HepG2 (cell line): ENCODE measurements at regions of chr17 and their contacts with region 1.

Region 1: DNA sequence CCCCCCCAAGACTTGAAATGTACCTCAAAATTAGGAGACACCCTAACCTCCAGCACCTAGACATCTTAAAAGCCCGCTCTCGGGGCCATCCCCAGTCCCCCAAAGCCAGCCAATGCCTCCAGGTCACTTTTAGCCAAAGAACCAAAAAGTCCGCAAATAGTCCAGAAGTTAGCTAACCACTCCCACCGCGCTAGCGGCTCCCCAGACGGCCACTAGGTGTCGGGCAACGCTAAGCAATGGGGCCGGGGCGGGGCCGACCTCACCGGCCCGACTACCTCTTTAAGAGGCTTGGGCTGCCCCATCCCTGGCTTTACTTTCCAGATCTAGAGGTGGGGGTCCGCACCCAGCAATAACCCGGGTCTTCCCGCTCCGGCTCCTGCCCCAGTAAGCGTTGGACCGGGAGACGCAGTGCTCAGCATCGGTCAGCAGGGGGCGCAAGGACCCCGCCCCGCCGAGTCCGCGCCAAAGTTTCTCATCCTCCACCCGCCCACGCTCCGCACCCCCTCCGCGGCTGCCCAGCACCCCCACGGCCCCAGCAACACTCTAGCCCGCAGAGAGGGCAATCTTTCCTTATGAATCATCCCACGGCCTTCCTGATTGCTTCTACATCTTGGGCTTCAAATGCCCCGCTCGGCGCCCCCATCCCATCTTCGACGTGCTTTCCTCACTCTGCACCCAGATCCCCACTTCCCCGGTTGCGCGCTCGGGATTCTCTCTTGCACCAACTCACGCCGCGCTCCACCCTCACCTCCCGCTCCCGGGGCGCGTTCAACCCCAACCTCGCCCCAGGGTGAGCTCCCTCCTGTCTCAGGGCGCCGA is 765 bp downstream of the COL1A1 start:
- DNase-seq: peak; percentile 71
- ATAC-seq: peak; percentile 84
- H3K4me3 ChIP-seq: peak overlapping the region; percentile 26 to 73 (median 36); a peak in 5 of 6 replicates
- H3K27ac ChIP-seq: no peak overlapping the region
- H3K4me1 ChIP-seq: 0 out of 2 replicates have a peak, but pooled peaks cover 9% of the 10 kb centered on the region
- H3K27me3 ChIP-seq: peaks cover 10 to 72% of the 10 kb centered on the region in 2 experiments
- CTCF ChIP-seq: peak; percentile 95
- EP300 ChIP-seq: no peak
- POLR2A ChIP-seq: no peak
- RAD21 ChIP-seq: peak; percentile 100

Region 2: DNA sequence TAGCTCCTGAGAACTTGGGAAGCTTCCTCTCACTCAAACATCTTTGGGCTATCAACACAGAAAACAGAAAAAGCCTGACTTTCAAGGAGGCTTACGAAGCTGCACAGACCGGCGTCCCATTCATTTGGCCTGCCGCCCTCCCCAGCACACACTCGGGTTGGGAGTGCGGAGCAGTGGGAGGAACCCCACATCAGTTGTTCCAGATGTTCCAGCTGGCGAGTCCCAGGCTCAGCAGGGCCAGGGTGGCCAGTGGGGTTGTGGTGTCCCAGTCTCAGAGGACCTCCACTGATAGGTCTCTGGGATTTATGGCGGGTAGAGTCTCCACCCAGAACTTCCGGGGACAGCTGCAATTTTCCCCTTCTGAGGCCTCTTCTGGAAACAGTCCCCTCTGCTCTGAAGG is 274.7 kb before region 1 on chr17:
- CTCF ChIA-PET with region 1: no interaction called
- POLR2A ChIA-PET with region 1: no interaction called
- in situ Hi-C with region 1: no loop called
- intact Hi-C with region 1: no loop called
- DNase-seq: no peak
- ATAC-seq: no peak
- H3K4me3 ChIP-seq: no peak overlapping the region
- H3K27ac ChIP-seq: no peak overlapping the region
- H3K4me1 ChIP-seq: peaks cover 24% of the 10 kb centered on the region
- H3K27me3 ChIP-seq: peaks cover 6 to 55% of the 10 kb centered on the region in 2 experiments; a peak in 3 of 5 replicates
- CTCF ChIP-seq: no peak
- EP300 ChIP-seq: no peak
- POLR2A ChIP-seq: no peak
- RAD21 ChIP-seq: no peak

Region 3: GRCh38 chr17:50169121-50169764 is 31.4 kb before region 1 on chr17:
- CTCF ChIA-PET with region 1: interaction called, 36 read pairs
- POLR2A ChIA-PET with region 1: no interaction called
- in situ Hi-C with region 1: no loop called
- intact Hi-C with region 1: loop called (anchors 1 kb)
- DNase-seq: peak; percentile 69
- ATAC-seq: peak; percentile 58
- H3K4me3 ChIP-seq: no peak overlapping the region
- H3K27ac ChIP-seq: no peak overlapping the region
- H3K4me1 ChIP-seq: peaks cover 33% of the 10 kb centered on the region
- H3K27me3 ChIP-seq: peaks cover 10 to 46% of the 10 kb centered on the region in 2 experiments; a peak in 3 of 5 replicates
- CTCF ChIP-seq: peak; percentile 92
- EP300 ChIP-seq: no peak
- POLR2A ChIP-seq: no peak
- RAD21 ChIP-seq: peak; percentile 92

Region 4: GRCh38 chr17:50177983-50178834 is 22.5 kb before region 1 on chr17:
- CTCF ChIA-PET with region 1: interaction called, 10 read pairs
- POLR2A ChIA-PET with region 1: interaction called, 4 read pairs
- in situ Hi-C with region 1: no loop called
- intact Hi-C with region 1: no loop called
- DNase-seq: peak; percentile 89
- ATAC-seq: peak; percentile 93
- H3K4me3 ChIP-seq: peak overlapping the region; percentile 35 to 74 (median 47); a peak in 5 of 6 replicates
- H3K27ac ChIP-seq: no peak overlapping the region
- H3K4me1 ChIP-seq: peaks cover 73% of the 10 kb centered on the region
- H3K27me3 ChIP-seq: peaks cover under 1 to 16% of the 10 kb centered on the region in 2 experiments; a peak in 4 of 5 replicates
- CTCF ChIP-seq: peak; percentile 96
- EP300 ChIP-seq: peak in 1 of 2 experiments; percentile 17; a peak in 1 of 4 replicates
- POLR2A ChIP-seq: peak in 1 of 2 experiments; percentile 44; a peak in 3 of 4 replicates
- RAD21 ChIP-seq: peak; percentile 65

Region 5: GRCh38 chr17:50213026-50214022 is 12.7 kb after region 1 on chr17:
- CTCF ChIA-PET with region 1: interaction called, 11 read pairs
- POLR2A ChIA-PET with region 1: interaction called, 3 read pairs
- in situ Hi-C with region 1: no loop called
- intact Hi-C with region 1: no loop called
- DNase-seq: peak; percentile 73
- ATAC-seq: peak; percentile 54
- H3K4me3 ChIP-seq: no peak overlapping the region
- H3K27ac ChIP-seq: no peak overlapping the region
- H3K4me1 ChIP-seq: peaks cover 68% of the 10 kb centered on the region
- H3K27me3 ChIP-seq: peaks cover 0 to 32% of the 10 kb centered on the region in 2 experiments; a peak in 4 of 5 replicates
- CTCF ChIP-seq: peak; percentile 41
- EP300 ChIP-seq: no peak
- POLR2A ChIP-seq: no peak
- RAD21 ChIP-seq: no peak; the same call in 1 of the 2 replicates

Region 6: GRCh38 chr17:50269477-50270434 is 69.1 kb after region 1 on chr17:
- CTCF ChIA-PET with region 1: interaction called, 301 read pairs
- POLR2A ChIA-PET with region 1: no interaction called
- in situ Hi-C with region 1: loop called (anchors 5 kb)
- intact Hi-C with region 1: loop called (anchors 1 kb)
- DNase-seq: peak; percentile 61
- ATAC-seq: peak; percentile 77
- H3K4me3 ChIP-seq: no peak overlapping the region
- H3K27ac ChIP-seq: no peak overlapping the region
- H3K4me1 ChIP-seq: peaks cover 31% of the 10 kb centered on the region
- H3K27me3 ChIP-seq: peaks cover 10 to 73% of the 10 kb centered on the region in 2 experiments; a peak in 4 of 5 replicates
- CTCF ChIP-seq: peak; percentile 76
- EP300 ChIP-seq: no peak
- POLR2A ChIP-seq: no peak
- RAD21 ChIP-seq: peak; percentile 77